Activated B cell treated with CpG ODN at 0.5 μM for 24 hours (primary cell): ENCODE measurements at regions of chr6 and their contacts with region 1.

Region 1: GRCh38 chr6:96521644-96522464 is at the start of gene UFL1:
- DNase-seq: peak; percentile 91
- ATAC-seq: peak; percentile 94
- H3K4me3 Mint-ChIP-seq: peak within 1 kb of the TSS; percentile 100
- H3K27ac Mint-ChIP-seq: peak within 1 kb of the TSS; percentile 100
- H3K4me1 Mint-ChIP-seq: peaks cover 27% of the 10 kb centered on the region
- H3K27me3 Mint-ChIP-seq: no peaks in the 10 kb centered on the region
- CTCF ChIP-seq: no peak
- total RNA-seq, gene UFL1: 20.7 and 23.6 TPM in 2 replicates

Region 2: GRCh38 chr6:95577304-95578105 is 944.3 kb before region 1 on chr6 and contains the start of gene MANEA:
- CTCF ChIA-PET with region 1: no interaction called
- POLR2A ChIA-PET with region 1: interaction called, 4 read pairs
- intact Hi-C with region 1: loop called (anchors 1 kb)
- DNase-seq: peak; percentile 73
- ATAC-seq: peak; percentile 86
- H3K4me3 Mint-ChIP-seq: peak within 1 kb of the TSS; percentile 98
- H3K27ac Mint-ChIP-seq: peak within 1 kb of the TSS; percentile 98
- H3K4me1 Mint-ChIP-seq: peaks cover 33% of the 10 kb centered on the region
- H3K27me3 Mint-ChIP-seq: no peaks in the 10 kb centered on the region
- CTCF ChIP-seq: no peak
- total RNA-seq, gene MANEA: 5.0 and 7.5 TPM in 2 replicates

Region 3: GRCh38 chr6:96542702-96543101 is 20.8 kb after region 1 on chr6:
- CTCF ChIA-PET with region 1: no interaction called
- POLR2A ChIA-PET with region 1: interaction called, 5 read pairs
- intact Hi-C with region 1: loop called (anchors 2 kb)
- DNase-seq: no peak
- ATAC-seq: no peak
- H3K4me3 Mint-ChIP-seq: no peak overlapping the region
- H3K27ac Mint-ChIP-seq: no peak overlapping the region
- H3K4me1 Mint-ChIP-seq: no peaks in the 10 kb centered on the region
- H3K27me3 Mint-ChIP-seq: no peaks in the 10 kb centered on the region
- CTCF ChIP-seq: no peak

Region 4: DNA sequence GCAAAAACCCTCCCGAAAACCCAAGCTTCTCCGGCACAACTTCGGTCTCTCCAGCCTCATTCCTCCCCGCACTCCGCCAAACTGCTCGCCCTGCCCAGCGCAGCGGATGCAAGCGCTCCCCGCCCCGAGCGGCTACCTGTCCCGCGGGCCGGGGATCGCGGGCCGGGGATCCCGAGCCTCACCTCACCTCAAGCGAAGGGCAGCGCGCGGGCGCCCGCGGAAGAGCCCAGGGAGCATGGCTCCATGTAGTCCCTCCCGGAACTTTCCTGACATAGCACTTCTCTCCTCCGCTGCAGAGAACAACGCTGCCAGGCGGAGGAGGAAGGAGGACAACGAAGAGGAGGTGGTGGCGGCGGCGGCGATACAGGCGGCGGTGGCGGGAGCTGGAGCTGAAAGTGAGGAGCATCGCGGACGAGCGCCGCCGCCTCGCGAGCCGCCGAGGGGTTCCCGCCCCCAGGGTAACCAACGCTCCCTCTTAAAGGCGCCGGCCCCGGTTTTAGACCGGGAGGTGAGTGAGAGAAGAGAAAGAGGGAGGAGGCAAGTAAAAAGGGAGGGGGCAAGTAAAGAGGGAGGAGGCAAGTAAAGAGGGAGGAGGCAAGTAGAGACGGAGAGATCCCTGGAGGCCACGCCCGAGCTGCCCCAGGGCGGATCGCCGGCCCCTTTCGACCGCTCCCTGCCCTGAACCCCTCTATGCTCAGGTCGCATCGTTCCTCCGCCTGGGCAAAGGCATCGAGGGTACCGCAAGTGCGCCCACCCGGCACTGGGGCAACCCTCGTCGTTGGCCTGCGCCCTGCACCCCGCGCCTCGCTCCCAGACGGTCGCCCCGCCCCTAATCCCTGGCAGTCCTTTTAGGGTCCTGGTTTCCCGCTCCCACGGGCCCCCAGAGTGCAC is 315.5 kb after region 1 on chr6 and contains the start of gene GPR63:
- CTCF ChIA-PET with region 1: no interaction called
- POLR2A ChIA-PET with region 1: no interaction called
- intact Hi-C with region 1: loop called (anchors 5 kb)
- DNase-seq: peak; percentile 28
- ATAC-seq: peak; percentile 83
- H3K4me3 Mint-ChIP-seq: peak within 1 kb of the TSS; percentile 86
- H3K27ac Mint-ChIP-seq: no peak within 1 kb of the TSS
- H3K4me1 Mint-ChIP-seq: peaks cover 14% of the 10 kb centered on the region
- H3K27me3 Mint-ChIP-seq: peaks cover 41% of the 10 kb centered on the region
- CTCF ChIP-seq: no peak
- total RNA-seq, gene GPR63: 0.02 and 0.11 TPM in 2 replicates

Region 5: GRCh38 chr6:97282726-97283617 is 761.1 kb after region 1 on chr6 and contains the start of gene MMS22L:
- CTCF ChIA-PET with region 1: no interaction called
- POLR2A ChIA-PET with region 1: interaction called, 3 read pairs
- intact Hi-C with region 1: loop called (anchors 1 kb)
- DNase-seq: peak; percentile 83
- ATAC-seq: peak; percentile 98
- H3K4me3 Mint-ChIP-seq: peak within 1 kb of the TSS; percentile 91
- H3K27ac Mint-ChIP-seq: peak within 1 kb of the TSS; percentile 87
- H3K4me1 Mint-ChIP-seq: peaks cover 21% of the 10 kb centered on the region
- H3K27me3 Mint-ChIP-seq: no peaks in the 10 kb centered on the region
- CTCF ChIP-seq: no peak
- total RNA-seq, gene MMS22L: 15.5 and 17.9 TPM in 2 replicates